Heart right ventricle (tissue), 16 donors: ENCODE measurements at regions of chr2 and their contacts with region 1.

Region 1: DNA sequence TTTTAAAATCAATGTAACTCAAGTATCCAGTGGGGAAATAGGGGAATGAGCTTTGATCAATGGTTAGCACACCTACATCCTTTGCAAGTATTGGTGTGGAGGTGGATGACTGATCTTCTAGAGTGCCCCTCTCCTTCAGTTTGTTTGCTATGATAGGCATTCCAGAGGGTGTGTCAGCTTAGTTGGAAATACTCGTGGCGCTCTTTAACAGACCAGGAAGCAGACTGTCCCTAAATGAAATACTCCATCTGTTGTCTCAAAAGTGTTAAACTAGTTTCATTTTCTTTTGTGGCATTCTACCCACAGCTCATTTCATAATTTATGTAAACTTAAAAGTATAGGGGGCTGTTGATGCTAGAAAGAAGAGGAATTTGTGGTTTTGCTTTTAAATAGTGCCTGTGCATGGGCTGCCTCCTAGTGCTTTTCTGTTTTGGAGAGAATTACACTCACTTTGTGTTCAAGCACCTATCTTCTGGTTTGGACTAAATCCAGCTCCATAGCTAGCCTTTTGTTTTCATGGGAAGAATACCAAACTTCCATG is 66.2 kb downstream of the STAT1 start:
- DNase-seq: no peak
- ATAC-seq: peak in 7 of 8 donors; percentile 48 to 75 (median 66)
- H3K4me3 ChIP-seq: peak overlapping the region in 5 of 10 donors; percentile 5 to 33 (median 21)
- H3K27ac ChIP-seq: peak overlapping the region in 7 of 10 donors; percentile 8 to 63 (median 35)
- H3K4me1 ChIP-seq: peaks cover 10 to 41% (median 28%) of the 10 kb centered on the region in 9 donors
- H3K27me3 ChIP-seq: no peaks in the 10 kb centered on the region
- CTCF ChIP-seq: peak in 3 of 9 donors; percentile 19 to 22 (median 21)

Region 2: GRCh38 chr2:190781604-190782198 is 166.1 kb before region 1 on chr2:
- intact Hi-C with region 1: no loop called
- DNase-seq: peak in 1 of 2 donors; percentile 54
- ATAC-seq: peak in 5 of 8 donors; percentile 47 to 68 (median 56)
- H3K4me3 ChIP-seq: no peak overlapping the region
- H3K27ac ChIP-seq: no peak overlapping the region
- H3K4me1 ChIP-seq: peaks cover 0 to 4% (median 0%) of the 10 kb centered on the region in 9 donors
- H3K27me3 ChIP-seq: peaks cover 0 to 3% (median 0%) of the 10 kb centered on the region in 7 donors
- CTCF ChIP-seq: peak; percentile 37 to 77 (median 69)

Region 3: DNA sequence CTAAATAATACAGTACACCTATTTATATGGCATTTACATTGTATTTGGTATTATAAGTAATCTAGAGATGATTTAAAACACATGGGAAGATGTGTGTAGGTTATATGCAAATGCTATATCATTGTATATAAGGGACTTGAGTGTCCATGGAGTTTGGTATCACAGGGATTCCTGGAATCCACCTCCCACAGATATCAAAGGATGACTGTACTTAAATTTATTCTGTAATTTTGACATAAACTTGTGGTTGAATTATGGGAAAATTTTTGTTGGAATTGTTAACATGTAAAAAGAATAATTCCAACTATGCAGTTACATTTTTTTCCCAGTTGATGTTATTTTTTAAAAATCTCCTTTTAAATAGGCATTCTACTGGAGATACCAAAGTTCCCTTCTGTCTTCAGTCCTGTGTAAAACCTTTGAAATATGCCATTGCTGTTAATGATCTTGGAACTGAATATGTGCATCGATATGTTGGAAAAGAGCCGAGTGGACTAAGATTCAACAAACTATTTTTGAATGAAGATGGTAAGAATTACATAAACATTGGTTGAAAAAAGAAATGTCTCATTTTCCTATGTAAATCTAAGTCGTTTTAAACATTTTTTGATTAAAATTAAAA is 43.0 kb before region 1 on chr2:
- intact Hi-C with region 1: loop called in 1 of 10 experiments (anchors 5 kb)
- DNase-seq: no peak
- ATAC-seq: no peak
- H3K4me3 ChIP-seq: no peak overlapping the region
- H3K27ac ChIP-seq: no peak overlapping the region
- H3K4me1 ChIP-seq: no peaks in the 10 kb centered on the region
- H3K27me3 ChIP-seq: no peaks in the 10 kb centered on the region
- CTCF ChIP-seq: no peak